Mammary epithelial cell (primary cell): ENCODE measurements at regions of chr7 and their contacts with region 1.

Region 1: DNA sequence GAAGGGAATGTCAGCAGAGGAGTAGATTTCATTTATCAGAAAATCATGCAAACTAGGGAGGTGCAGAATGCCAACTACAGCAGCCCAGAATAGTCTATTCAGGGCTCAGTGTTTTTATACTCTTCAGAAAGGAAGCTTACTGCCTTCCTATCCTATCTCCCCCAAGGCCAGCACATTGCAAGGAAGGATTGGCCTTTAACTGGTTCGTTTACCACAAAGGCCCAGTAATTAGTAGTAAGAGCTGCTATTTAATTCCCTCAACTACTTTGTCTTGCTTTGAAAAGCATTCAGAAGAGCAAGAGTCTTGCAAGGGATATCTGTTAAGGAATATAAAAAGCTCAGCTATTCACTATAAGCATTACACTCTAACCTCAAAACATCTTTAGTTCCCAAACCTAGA is 86.4 kb upstream of the RNF148 start:
- DNase-seq: no peak
- H3K4me3 ChIP-seq: no peak overlapping the region
- H3K27ac ChIP-seq: no peak overlapping the region
- H3K4me1 ChIP-seq: no peaks in the 10 kb centered on the region
- H3K27me3 ChIP-seq: no peaks in the 10 kb centered on the region
- CTCF ChIP-seq: no peak

Region 2: GRCh38 chr7:122736183-122736582 is 53.0 kb before region 1 on chr7:
- CTCF ChIA-PET with region 1: no interaction called
- dilution Hi-C with region 1: no loop called
- in situ Hi-C with region 1: no loop called
- intact Hi-C with region 1: loop called (anchors 5 kb)
- DNase-seq: no peak
- H3K4me3 ChIP-seq: no peak overlapping the region
- H3K27ac ChIP-seq: no peak overlapping the region
- H3K4me1 ChIP-seq: no peaks in the 10 kb centered on the region
- H3K27me3 ChIP-seq: no peaks in the 10 kb centered on the region
- CTCF ChIP-seq: no peak